ENCODE measurements at regions of chr14 and their contacts with region 1.

Region 1: DNA sequence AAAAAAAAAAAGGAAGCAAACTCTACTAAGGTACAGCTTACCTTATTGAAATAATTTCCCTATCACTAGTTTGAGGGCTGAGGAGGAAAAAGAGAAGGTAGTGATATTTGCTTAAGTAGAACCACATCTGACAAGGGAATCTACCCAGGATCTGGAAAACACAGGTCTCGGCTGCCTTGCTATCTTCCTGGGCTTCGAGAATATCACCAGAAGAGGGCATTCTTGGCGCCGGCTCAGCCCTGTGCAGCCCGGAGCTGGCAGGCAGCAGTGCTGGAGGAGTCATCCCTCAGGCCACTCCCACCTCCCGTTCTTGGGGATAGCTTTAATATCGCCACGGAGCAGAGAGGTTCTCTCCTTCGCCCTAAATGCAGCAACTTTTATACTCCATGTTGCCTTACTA is 1181.2 kb downstream of the VRK1 start:
- DNase-seq: peak; percentile 62 to 84 (median 71)
- ATAC-seq: peak; percentile 69 to 75
- H3K4me3 Mint-ChIP-seq: peak overlapping the region; percentile 90 to 98 (median 94)
- H3K27ac Mint-ChIP-seq: peak overlapping the region; percentile 86 to 98 (median 96)
- H3K4me1 Mint-ChIP-seq: peaks cover 39 to 78% (median 47%) of the 10 kb centered on the region in 4 donors
- H3K27me3 Mint-ChIP-seq: no peaks in the 10 kb centered on the region

Region 2: DNA sequence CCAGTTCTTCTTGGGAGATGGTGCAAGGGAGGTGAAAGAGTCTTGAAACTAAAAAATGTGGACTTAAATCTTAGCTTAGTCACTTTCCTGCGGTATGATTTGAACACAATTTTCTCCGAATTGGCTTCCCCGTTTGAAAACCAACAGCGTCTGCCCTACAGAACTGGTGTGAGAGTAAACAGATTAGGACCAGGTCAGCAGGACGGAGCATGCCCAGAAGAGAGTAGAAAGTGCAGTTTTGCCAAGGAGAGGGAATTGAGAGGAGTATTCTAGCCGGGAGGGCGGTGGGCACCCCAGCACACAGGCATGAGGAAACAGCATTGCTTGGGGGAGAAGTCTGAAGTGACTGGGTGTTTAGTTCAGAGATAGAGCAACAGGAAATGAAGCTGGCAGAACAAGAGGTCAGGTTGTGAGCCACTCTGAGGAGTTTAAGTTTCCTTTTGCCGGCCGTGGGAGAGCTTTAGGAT is 254.0 kb before region 1 on chr14:
- POLR2A ChIA-PET with region 1: interaction called, 28 read pairs
- DNase-seq: peak in 7 of 10 donors; percentile 29 to 65 (median 57)
- ATAC-seq: peak; percentile 82 to 86
- H3K4me3 Mint-ChIP-seq: peak overlapping the region; percentile 77 to 92 (median 85)
- H3K27ac Mint-ChIP-seq: peak overlapping the region; percentile 88 to 100 (median 96)
- H3K4me1 Mint-ChIP-seq: peaks cover 44 to 84% (median 77%) of the 10 kb centered on the region in 4 donors
- H3K27me3 Mint-ChIP-seq: no peaks in the 10 kb centered on the region

Region 3: GRCh38 chr14:97943619-97944018 is 34.7 kb before region 1 on chr14:
- POLR2A ChIA-PET with region 1: no interaction called
- DNase-seq: no peak
- ATAC-seq: no peak
- H3K4me3 Mint-ChIP-seq: no peak overlapping the region
- H3K27ac Mint-ChIP-seq: peak overlapping the region in 2 of 10 donors; percentile 20 to 53
- H3K4me1 Mint-ChIP-seq: peaks cover 4 to 42% (median 32%) of the 10 kb centered on the region in 4 donors
- H3K27me3 Mint-ChIP-seq: no peaks in the 10 kb centered on the region

Region 4: DNA sequence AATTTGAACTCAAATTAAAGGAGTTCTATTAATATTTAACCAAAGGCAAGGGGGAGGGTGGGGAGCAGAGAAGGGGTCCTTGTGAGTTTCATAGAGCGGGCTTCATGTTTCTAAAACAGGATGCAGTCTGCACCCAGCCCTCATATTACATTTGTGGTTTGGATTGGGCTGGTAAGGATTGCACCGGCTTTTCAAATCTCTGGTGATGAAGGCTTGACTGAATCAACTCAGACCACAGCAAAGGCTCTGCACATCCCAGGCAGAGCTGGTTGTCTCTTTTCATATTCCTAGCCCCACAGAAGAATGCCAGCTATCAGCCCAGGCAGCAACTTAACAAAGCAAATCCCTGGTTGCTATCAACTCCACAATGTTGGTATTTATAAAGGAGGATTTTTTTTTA is 40.3 kb after region 1 on chr14:
- POLR2A ChIA-PET with region 1: interaction called, 24 read pairs
- DNase-seq: peak in 9 of 10 donors; percentile 38 to 82 (median 68)
- ATAC-seq: peak; percentile 94 to 96
- H3K4me3 Mint-ChIP-seq: peak overlapping the region; percentile 23 to 61 (median 48)
- H3K27ac Mint-ChIP-seq: peak overlapping the region; percentile 7 to 92 (median 68)
- H3K4me1 Mint-ChIP-seq: peaks cover 38 to 87% (median 73%) of the 10 kb centered on the region in 4 donors
- H3K27me3 Mint-ChIP-seq: no peaks in the 10 kb centered on the region

Region 5: DNA sequence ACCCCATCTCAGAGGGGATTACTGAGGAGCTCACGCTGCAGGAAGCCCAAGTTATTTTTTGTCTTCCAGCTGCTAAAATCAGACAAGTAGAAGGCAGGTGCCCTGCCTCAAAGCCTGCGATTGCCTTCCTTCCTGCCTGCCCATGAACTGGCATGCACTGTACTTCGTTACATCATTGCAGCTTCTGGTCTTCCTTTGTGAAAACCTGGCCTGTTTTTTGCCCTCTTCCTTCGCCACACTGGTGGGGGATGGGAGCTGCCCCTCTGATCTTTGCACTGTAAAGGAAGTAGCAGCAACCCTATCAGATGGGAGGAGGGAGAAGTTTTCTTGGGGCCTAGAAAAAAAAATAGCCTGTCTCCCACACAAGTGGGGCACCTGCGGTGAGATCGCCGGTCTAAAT is 195.0 kb after region 1 on chr14:
- POLR2A ChIA-PET with region 1: interaction called, 14 read pairs
- DNase-seq: peak; percentile 28 to 89 (median 72)
- ATAC-seq: peak; percentile 60 to 81
- H3K4me3 Mint-ChIP-seq: peak overlapping the region; percentile 66 to 91 (median 87)
- H3K27ac Mint-ChIP-seq: peak overlapping the region; percentile 90 to 99 (median 97)
- H3K4me1 Mint-ChIP-seq: peaks cover 57 to 100% (median 98%) of the 10 kb centered on the region in 4 donors
- H3K27me3 Mint-ChIP-seq: no peaks in the 10 kb centered on the region

Region 6: GRCh38 chr14:98198385-98198784 is 220.0 kb after region 1 on chr14:
- POLR2A ChIA-PET with region 1: interaction called, 10 read pairs
- DNase-seq: peak in 3 of 10 donors; percentile 31 to 45 (median 42)
- ATAC-seq: peak; percentile 42 to 62
- H3K4me3 Mint-ChIP-seq: peak overlapping the region; percentile 20 to 87 (median 70)
- H3K27ac Mint-ChIP-seq: peak overlapping the region; percentile 70 to 100 (median 96)
- H3K4me1 Mint-ChIP-seq: peaks cover 57 to 99% (median 89%) of the 10 kb centered on the region in 4 donors
- H3K27me3 Mint-ChIP-seq: no peaks in the 10 kb centered on the region

Region 7: GRCh38 chr14:99230208-99231151 is 1252.1 kb after region 1 on chr14:
- POLR2A ChIA-PET with region 1: interaction called, 12 read pairs
- DNase-seq: peak; percentile 69 to 93 (median 88)
- ATAC-seq: peak; percentile 46 to 76
- H3K4me3 Mint-ChIP-seq: peak overlapping the region; percentile 71 to 94 (median 82)
- H3K27ac Mint-ChIP-seq: peak overlapping the region; percentile 97 to 100 (median 98)
- H3K4me1 Mint-ChIP-seq: peaks cover 65 to 97% (median 95%) of the 10 kb centered on the region in 4 donors
- H3K27me3 Mint-ChIP-seq: no peaks in the 10 kb centered on the region

Region 8: DNA sequence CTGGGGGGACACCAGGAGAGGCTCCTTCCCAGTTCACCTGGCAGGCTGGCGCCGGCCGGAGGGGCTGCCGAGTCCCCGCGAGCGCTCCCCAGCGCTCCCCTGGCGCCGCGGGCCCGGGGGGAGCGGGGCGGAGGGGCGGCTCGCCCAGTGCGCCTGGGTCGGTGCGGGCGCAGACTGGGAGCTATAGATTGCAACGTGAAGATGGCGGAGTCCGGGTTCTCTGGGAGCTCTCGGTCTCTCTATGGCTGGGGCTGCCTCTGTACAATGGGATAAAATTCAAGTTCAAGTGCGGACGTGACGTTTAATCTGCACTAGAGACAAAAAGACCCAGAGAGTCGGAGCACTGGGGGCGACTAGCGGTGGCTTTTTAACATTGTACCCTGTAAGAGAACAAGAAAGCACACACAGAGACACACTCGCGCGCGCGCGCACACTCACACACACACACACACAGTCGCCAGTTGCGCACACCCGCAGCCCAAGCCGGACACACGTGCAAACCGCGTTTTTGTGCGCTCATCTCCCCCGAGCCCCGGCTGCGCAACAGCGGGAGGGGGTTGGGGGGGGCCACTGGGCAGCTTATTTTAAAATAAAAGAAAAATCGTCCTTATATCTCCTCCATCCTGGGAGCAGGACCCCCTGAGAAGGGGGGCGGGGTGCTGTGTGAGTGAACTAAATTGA is 1293.8 kb after region 1 on chr14 and contains the start of gene BCL11B:
- POLR2A ChIA-PET with region 1: interaction called, 69 read pairs
- DNase-seq: peak; percentile 73 to 96 (median 87)
- ATAC-seq: peak; percentile 69 to 79
- H3K4me3 Mint-ChIP-seq: peak within 1 kb of the TSS; percentile 90 to 100 (median 96)
- H3K27ac Mint-ChIP-seq: peak within 1 kb of the TSS; percentile 93 to 99 (median 96)
- H3K4me1 Mint-ChIP-seq: peaks cover 13 to 56% (median 32%) of the 10 kb centered on the region in 4 donors
- H3K27me3 Mint-ChIP-seq: peaks cover 0 to 9% (median 0%) of the 10 kb centered on the region in 5 donors
- polyA plus RNA-seq, gene BCL11B: 8.2 to 12.1 (median 9.5) TPM